Activated B cell treated with CpG ODN at 0.5 μM for 24 hours (primary cell): ENCODE measurements at regions of chr3 and their contacts with region 1.

Region 1: DNA sequence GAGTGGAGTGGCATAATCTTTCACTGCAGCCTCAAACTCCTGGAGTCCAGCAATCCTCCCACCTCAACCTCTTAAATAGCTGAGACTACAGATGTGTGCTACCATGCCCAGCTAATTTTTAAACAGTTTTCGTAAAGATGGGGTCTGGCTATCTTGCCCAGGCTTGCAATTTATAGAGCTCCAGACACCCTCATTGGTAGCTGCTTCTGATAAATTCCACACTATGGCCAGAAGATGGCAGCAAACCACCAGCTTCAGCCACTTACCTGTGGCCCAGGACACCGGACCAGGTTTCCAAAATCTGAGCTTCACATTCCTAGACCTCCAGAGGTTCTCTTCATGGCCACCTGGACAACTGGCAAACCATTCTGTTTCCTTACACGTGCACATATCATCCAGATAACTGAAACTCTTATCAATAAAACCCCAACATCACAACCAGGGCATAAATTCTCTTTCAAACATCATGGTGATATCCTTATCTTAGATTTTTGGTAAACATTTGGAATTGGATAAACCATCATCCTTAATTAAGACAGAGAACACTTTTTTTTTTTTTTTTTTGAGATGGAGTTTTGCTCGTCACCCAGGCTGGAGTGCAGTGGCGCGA is 28.9 kb downstream of the FBXW12 start:
- DNase-seq: peak; percentile 24
- ATAC-seq: peak; percentile 94
- H3K4me3 Mint-ChIP-seq: no peak overlapping the region
- H3K27ac Mint-ChIP-seq: no peak overlapping the region
- H3K4me1 Mint-ChIP-seq: no peaks in the 10 kb centered on the region
- H3K27me3 Mint-ChIP-seq: peaks cover under 1% of the 10 kb centered on the region
- CTCF ChIP-seq: peak; percentile 41

Region 2: GRCh38 chr3:48446425-48447193 is 45.7 kb after region 1 on chr3 and contains the start of gene ATRIP:
- CTCF ChIA-PET with region 1: interaction called, 16 read pairs
- POLR2A ChIA-PET with region 1: no interaction called
- intact Hi-C with region 1: no loop called
- DNase-seq: peak; percentile 88
- ATAC-seq: peak; percentile 100
- H3K4me3 Mint-ChIP-seq: peak within 1 kb of the TSS; percentile 85
- H3K27ac Mint-ChIP-seq: peak within 1 kb of the TSS; percentile 82
- H3K4me1 Mint-ChIP-seq: peaks cover 41% of the 10 kb centered on the region
- H3K27me3 Mint-ChIP-seq: no peaks in the 10 kb centered on the region
- CTCF ChIP-seq: no peak
- total RNA-seq, gene ATRIP: 10.5 and 14.6 TPM in 2 replicates

Region 3: DNA sequence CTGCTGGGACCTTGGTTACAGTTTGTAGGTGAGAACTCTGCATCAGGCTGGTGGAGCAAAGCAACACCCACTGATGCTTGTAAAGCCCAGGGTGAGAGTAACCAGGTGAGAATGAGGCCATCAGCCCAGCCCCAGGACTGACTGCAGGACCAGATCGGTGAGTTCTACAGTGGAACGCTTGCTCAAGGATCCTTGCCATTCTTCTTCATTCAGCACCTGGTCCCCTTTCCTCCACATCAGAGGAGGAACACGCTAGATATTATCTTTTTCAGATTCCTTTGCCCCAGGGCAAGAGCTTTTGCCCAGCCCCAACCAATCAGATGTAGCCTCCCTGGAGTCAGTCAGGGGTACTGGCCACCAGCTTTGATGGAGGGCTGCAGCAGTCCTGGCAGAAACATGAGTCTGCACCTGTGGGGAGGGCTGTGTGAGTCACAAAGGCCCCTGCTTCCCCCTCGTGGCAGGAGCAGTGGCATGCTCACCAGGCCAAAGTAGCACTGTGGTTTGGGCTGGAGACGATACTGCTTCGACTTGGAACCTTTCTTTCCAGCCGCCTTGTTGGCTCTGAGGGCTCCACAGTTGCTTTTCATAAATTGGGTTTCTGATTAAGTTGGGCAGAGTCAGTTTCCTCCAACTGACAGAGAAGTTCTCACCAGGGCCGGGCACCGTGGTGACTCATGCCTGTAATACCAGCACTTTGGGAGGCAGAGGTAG is 106.6 kb after region 1 on chr3:
- CTCF ChIA-PET with region 1: interaction called, 64 read pairs
- POLR2A ChIA-PET with region 1: no interaction called
- intact Hi-C with region 1: loop called (anchors 1 kb)
- DNase-seq: peak; percentile 56
- ATAC-seq: peak; percentile 88
- H3K4me3 Mint-ChIP-seq: peak overlapping the region; percentile 24
- H3K27ac Mint-ChIP-seq: no peak overlapping the region
- H3K4me1 Mint-ChIP-seq: peaks cover 15% of the 10 kb centered on the region
- H3K27me3 Mint-ChIP-seq: no peaks in the 10 kb centered on the region
- CTCF ChIP-seq: peak; percentile 28

Region 4: DNA sequence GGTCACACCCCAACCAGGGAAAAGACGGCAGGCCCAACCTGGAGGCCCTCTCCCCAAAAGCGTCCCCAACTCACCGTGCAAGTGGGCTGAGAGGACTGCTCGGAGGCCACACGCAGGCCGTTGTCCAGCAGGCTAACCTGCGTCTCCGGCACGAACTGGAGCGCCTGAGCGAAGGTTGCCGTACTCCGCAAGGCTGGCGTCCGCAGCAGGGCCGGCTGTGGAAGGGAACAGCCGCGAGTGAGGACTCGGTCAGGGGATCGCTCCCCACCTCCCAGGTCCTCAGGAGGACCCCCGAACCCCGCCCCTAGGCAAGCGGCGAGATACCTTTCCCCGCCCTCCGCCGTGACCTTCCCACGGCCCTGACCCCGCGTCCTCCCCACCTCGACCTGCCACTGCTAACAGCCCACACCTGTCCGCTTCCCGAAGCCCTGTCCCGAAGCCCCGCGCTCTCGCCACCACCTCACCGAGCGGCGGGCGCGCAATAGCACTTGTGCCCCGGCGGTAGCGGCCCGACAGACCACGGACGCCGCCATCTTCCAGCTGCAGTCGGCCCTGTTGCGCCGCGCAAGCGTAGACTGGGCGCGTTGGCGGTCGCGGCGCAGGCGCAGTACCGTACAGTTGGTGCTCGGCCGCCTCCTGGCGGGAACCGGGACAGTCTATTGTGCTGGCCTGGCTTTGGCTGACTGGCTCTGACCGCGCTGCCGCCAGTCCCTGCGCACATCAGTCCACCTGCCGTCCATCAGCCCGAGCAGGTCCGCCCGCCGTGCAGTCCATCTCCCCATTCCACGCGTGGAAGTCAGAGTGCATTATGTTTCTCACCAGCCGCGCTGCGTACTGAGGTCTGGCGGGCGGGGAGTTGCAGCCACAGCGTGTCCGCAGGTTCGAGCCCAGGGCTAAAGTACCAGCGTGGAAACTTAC is 208.4 kb after region 1 on chr3 and contains the start of gene UQCRC1:
- CTCF ChIA-PET with region 1: interaction called, 4 read pairs
- POLR2A ChIA-PET with region 1: no interaction called
- intact Hi-C with region 1: loop called (anchors 1 kb)
- DNase-seq: peak; percentile 89
- ATAC-seq: peak; percentile 99
- H3K4me3 Mint-ChIP-seq: peak within 1 kb of the TSS; percentile 98
- H3K27ac Mint-ChIP-seq: peak within 1 kb of the TSS; percentile 93
- H3K4me1 Mint-ChIP-seq: peaks cover 18% of the 10 kb centered on the region
- H3K27me3 Mint-ChIP-seq: no peaks in the 10 kb centered on the region
- CTCF ChIP-seq: no peak
- total RNA-seq, gene UQCRC1: 117 and 118 TPM in 2 replicates

Region 5: GRCh38 chr3:48739955-48740823 is 339.3 kb after region 1 on chr3:
- CTCF ChIA-PET with region 1: interaction called, 15 read pairs
- POLR2A ChIA-PET with region 1: no interaction called
- intact Hi-C with region 1: loop called (anchors 5 kb)
- DNase-seq: peak; percentile 42
- ATAC-seq: peak; percentile 97
- H3K4me3 Mint-ChIP-seq: no peak overlapping the region
- H3K27ac Mint-ChIP-seq: no peak overlapping the region
- H3K4me1 Mint-ChIP-seq: peaks cover 10% of the 10 kb centered on the region
- H3K27me3 Mint-ChIP-seq: no peaks in the 10 kb centered on the region
- CTCF ChIP-seq: no peak